HEK293T (cell line): ENCODE measurements at regions of chr5 and their contacts with region 1.

Region 1: DNA sequence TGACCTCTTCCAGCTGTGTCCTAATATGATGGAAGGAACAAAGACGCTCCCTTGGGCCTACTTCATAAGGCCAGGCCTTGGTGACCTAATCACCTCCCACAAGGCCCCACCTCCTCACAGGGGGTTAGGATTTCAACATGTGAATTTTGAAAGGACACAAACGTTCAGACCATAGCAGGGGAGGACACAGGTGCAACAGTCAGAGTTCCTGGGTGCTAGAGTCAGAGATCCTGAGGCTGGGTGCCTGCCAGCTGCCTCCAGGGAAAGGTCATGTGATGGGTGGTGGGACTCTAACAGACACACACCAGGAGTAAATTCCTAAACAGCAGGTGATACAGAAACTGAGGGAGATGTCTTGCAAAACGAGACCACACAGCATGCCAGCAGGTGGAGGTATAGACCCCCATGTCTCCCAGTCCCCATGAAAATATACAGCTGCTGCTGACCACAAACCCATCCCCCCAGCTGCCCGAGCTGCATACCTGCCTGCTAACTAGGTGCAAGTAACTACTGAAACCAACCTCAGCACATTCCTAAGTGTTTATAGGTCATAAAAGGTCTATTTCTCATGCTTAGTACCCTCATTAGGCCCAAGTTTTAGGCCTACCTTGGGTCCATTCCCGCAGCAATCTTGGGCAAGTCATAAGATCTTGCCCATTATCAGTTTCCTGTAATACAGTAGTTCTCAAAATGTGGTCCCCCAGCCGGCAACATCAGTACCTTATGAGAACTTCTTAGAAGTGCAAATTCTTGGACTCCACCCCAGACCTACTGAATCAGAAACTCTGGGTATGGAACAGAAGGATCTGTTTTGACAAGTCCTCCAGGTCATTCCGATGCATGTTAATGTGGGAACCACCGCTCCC is 245.4 kb downstream of the ENC1 start:
- DNase-seq: no peak

Region 2: GRCh38 chr5:74415695-74416102 is 20.6 kb after region 1 on chr5:
- CTCF ChIA-PET with region 1: no interaction called
- POLR2A ChIA-PET with region 1: no interaction called
- DNase-seq: no peak

Region 3: DNA sequence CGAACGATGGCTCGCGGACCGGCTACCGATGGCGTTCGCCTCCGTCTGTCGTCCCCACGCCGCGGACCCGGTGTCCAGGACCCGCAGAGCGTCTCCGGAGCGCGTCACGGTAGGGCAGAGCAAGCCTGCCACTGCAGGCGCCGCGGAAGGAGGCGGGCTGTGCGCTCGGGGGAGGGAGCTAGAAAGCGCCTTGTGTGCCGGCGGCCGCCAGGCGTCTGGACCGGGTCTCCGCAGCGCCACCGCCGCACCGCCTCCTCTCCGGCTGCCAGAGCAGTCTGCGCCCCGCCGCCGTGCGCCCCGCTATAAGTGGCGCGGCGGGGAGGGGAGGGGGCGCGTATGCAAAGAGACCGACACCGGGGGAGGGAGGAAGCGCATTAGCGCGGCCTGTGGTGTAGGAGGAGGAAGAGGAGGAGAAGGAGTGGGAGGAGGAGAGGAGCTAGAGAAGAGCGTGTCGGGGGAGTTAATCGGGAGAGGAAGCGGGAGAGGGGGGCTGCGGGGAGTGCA is 245.4 kb after region 1 on chr5 and contains the start of gene ENC1:
- CTCF ChIA-PET with region 1: interaction called, 8 read pairs
- POLR2A ChIA-PET with region 1: interaction called, 12 read pairs
- DNase-seq: peak; percentile 74